ENCODE measurements at regions of chr12 and their contacts with region 1.

Region 1: GRCh38 chr12:14803011-14803829 is at the starts of genes C12orf60 and WBP11:
- DNase-seq: peak; percentile 99
- H3K4me3 ChIP-seq: peak within 1 kb of the TSS; percentile 82 to 96 (median 85)
- H3K27ac ChIP-seq: peak within 1 kb of the TSS; percentile 91 to 96 (median 92)
- H3K4me1 ChIP-seq: peaks cover 13 to 24% (median 22%) of the 10 kb centered on the region in 4 donors
- H3K27me3 ChIP-seq: no peaks in the 10 kb centered on the region
- CTCF ChIP-seq: peak in 1 of 3 experiments; percentile 13
- EP300 ChIP-seq: no peak
- POLR2A ChIP-seq: peak; percentile 13
- total RNA-seq, gene C12orf60: 0.66 to 2.1 (median 1.1) TPM
- total RNA-seq, gene WBP11: 18.2 to 25.7 (median 19.1) TPM

Region 2: GRCh38 chr12:14479004-14479403 is 324.2 kb before region 1 on chr12:
- intact Hi-C with region 1: no loop called
- DNase-seq: no peak
- H3K4me3 ChIP-seq: no peak overlapping the region
- H3K27ac ChIP-seq: no peak overlapping the region
- H3K4me1 ChIP-seq: no peaks in the 10 kb centered on the region
- H3K27me3 ChIP-seq: no peaks in the 10 kb centered on the region
- CTCF ChIP-seq: no peak
- EP300 ChIP-seq: no peak
- POLR2A ChIP-seq: no peak

Region 3: DNA sequence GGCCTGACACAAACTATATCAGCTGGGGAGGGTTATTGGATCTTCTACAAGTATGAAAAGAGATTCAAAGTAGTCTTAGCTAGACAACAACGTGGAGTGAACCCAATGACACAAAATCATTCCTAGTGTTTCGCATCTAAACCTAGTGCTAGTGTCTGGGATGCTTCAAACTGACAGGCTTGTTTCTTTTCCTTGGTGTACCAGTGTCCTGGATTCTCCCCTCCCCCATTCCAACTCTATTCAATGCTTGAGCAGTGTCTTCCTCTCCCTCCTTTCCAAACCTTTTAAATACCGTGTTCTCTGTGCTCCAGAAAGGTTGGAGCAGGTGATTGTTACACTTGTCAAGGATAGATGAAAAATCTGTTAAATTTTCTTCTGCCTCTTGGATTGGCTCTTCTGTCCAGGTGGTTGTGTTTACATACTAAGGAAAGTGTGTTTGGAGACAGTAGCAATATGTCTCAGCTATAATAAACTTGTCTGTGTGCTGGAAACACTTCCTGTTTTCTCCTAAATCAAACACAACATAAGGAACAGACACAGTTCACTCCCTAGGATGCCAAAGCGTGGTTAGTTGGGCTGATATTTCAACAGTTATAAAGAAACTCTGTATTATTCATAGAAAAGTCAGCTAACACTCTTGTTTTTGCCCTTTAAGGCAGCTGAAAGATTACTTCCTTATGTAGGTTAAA is 92.4 kb before region 1 on chr12:
- intact Hi-C with region 1: no loop called
- DNase-seq: no peak
- H3K4me3 ChIP-seq: no peak overlapping the region
- H3K27ac ChIP-seq: no peak overlapping the region
- H3K4me1 ChIP-seq: no peaks in the 10 kb centered on the region
- H3K27me3 ChIP-seq: no peaks in the 10 kb centered on the region
- CTCF ChIP-seq: no peak
- EP300 ChIP-seq: no peak
- POLR2A ChIP-seq: no peak

Region 4: GRCh38 chr12:14769969-14770495 is 33.2 kb before region 1 on chr12:
- intact Hi-C with region 1: loop called (anchors 5 kb)
- DNase-seq: peak; percentile 95
- H3K4me3 ChIP-seq: peak overlapping the region; percentile 74 to 85 (median 80)
- H3K27ac ChIP-seq: peak overlapping the region; percentile 93 to 98 (median 94)
- H3K4me1 ChIP-seq: peaks cover 5 to 42% (median 38%) of the 10 kb centered on the region in 4 donors
- H3K27me3 ChIP-seq: no peaks in the 10 kb centered on the region
- CTCF ChIP-seq: peak; percentile 77 to 85 (median 84)
- EP300 ChIP-seq: no peak
- POLR2A ChIP-seq: no peak

Region 5: GRCh38 chr12:15088105-15088504 is 284.9 kb after region 1 on chr12:
- intact Hi-C with region 1: no loop called
- DNase-seq: no peak
- H3K4me3 ChIP-seq: no peak overlapping the region
- H3K27ac ChIP-seq: no peak overlapping the region
- H3K4me1 ChIP-seq: no peaks in the 10 kb centered on the region
- H3K27me3 ChIP-seq: no peaks in the 10 kb centered on the region
- CTCF ChIP-seq: no peak
- EP300 ChIP-seq: no peak
- POLR2A ChIP-seq: no peak

Region 6: GRCh38 chr12:15151161-15152120 is 348.2 kb after region 1 on chr12:
- intact Hi-C with region 1: no loop called
- DNase-seq: no peak
- H3K4me3 ChIP-seq: no peak overlapping the region
- H3K27ac ChIP-seq: peak overlapping the region in 2 of 4 donors; percentile 22 to 33
- H3K4me1 ChIP-seq: peaks cover 12 to 53% (median 44%) of the 10 kb centered on the region in 4 donors
- H3K27me3 ChIP-seq: no peaks in the 10 kb centered on the region
- CTCF ChIP-seq: peak; percentile 56 to 65 (median 65)
- EP300 ChIP-seq: no peak
- POLR2A ChIP-seq: no peak